ENCODE measurements at regions of chr9 and their contacts with region 1.

Region 1: GRCh38 chr9:87336914-87337333 is 160.7 kb upstream of the DAPK1 start:
- DNase-seq: peak; percentile 84
- H3K4me3 ChIP-seq: peak overlapping the region; percentile 42
- CTCF ChIP-seq: peak; percentile 51

Region 2: GRCh38 chr9:87233899-87234455 is 102.9 kb before region 1 on chr9:
- in situ Hi-C with region 1: no loop called
- DNase-seq: no peak
- H3K4me3 ChIP-seq: no peak overlapping the region
- CTCF ChIP-seq: no peak

Region 3: GRCh38 chr9:87389936-87390335 is 53.0 kb after region 1 on chr9:
- in situ Hi-C with region 1: loop called (anchors 5 kb)
- DNase-seq: no peak
- H3K4me3 ChIP-seq: no peak overlapping the region
- CTCF ChIP-seq: no peak

Region 4: GRCh38 chr9:87662808-87663528 is 326.0 kb after region 1 on chr9:
- in situ Hi-C with region 1: loop called (anchors 5 kb)
- DNase-seq: peak; percentile 78
- H3K4me3 ChIP-seq: no peak overlapping the region
- CTCF ChIP-seq: peak; percentile 92

Measured in astrocyte of the cerebellum (primary cell).